ENCODE measurements at regions of chr11 and their contacts with region 1.

Region 1: DNA sequence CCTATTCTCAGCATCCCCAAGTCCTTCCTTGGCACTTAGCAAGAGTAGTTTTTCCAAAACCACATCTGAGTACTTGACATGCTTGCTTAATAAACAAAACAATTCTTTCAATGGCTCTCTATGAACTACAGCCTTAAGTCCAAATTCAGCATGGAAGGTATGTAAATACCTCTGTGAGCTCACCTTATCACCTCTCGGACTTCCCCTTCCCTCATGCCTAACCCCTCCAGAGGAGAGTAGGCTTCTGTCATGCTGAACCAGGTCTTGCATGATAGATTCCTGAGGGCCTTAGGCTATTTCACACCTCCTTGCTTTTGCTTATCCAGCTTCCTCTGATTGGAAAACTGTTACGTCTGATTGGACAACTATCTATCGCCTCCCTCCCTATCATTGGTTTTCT is 312.9 kb upstream of the CCDC90B start:
- DNase-seq: no peak

Region 2: GRCh38 chr11:83655976-83656375 is 56.9 kb after region 1 on chr11:
- intact Hi-C with region 1: loop called (anchors 2 kb)
- DNase-seq: peak in 1 of 42 donors; percentile 12

Region 3: GRCh38 chr11:83764643-83765042 is 165.6 kb after region 1 on chr11:
- intact Hi-C with region 1: no loop called
- DNase-seq: no peak

Measured in head of caudate nucleus (tissue), 42 donors.